Naive thymus-derived CD4-positive, alpha-beta T cell (primary cell): ENCODE measurements at regions of chr5 and their contacts with region 1.

Region 1: DNA sequence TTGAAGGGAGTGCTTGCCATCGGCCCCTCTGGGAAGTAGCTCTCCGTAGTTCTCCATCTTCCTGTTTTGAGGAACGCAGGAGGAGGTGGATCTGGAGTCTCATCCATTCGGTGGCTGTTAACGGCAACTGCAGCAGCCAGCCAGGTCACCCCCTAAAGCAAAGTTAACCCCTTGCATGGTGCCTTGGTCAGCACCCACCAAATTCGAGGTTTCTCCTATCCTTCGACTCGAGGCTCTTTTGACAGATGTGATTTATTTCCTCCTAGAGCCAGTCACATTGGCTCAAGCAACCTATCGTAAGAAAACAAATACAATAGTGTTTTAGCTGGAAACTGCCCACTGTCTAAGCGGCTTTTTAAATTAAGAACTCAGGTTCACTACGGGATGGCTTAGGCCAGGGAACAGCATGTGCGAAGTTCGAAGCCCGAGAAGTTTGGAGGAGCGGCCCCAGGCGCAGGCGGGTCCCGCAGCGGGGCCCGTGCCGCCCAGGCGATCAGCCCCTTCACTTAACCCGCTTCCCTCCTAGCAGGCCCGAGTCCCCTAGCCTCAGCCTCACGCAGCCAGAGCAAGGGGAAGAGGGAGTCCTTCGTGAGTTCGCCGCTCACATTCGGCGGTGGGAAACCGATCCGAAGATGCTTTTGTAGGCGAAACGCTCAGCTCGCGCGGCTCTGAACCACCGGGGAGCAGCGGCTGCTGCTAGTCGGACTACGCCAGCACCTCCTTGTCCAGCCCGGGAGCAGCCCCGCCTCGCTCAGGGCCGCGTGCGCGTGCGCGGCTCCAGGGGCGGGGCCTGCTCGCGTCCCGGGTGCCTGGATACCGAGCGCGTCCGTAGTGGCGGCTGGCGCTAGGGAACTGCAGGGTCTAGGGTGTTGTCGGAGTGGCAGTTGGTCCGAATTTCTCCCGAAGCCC is at the start of gene ROPN1L:
- DNase-seq: peak; percentile 64 to 89 (median 75)
- ATAC-seq: peak; percentile 97
- H3K4me3 ChIP-seq: peak within 1 kb of the TSS; percentile 97
- H3K4me3 Mint-ChIP-seq: peak within 1 kb of the TSS; percentile 83 to 94 (median 87)
- H3K27ac ChIP-seq: peak within 1 kb of the TSS; percentile 68
- H3K27ac Mint-ChIP-seq: peak within 1 kb of the TSS in 8 of 9 donors; percentile 31 to 82 (median 68)
- H3K4me1 ChIP-seq: peaks cover 35 to 44% of the 10 kb centered on the region in 2 donors
- H3K4me1 Mint-ChIP-seq: peaks cover 36 to 58% (median 49%) of the 10 kb centered on the region in 7 donors
- H3K27me3 ChIP-seq: no peaks in the 10 kb centered on the region
- H3K27me3 Mint-ChIP-seq: peaks cover 0 to 7% (median 0%) of the 10 kb centered on the region in 5 donors
- total RNA-seq, gene ROPN1L: 0.32 to 2.6 (median 0.61) TPM

Region 2: DNA sequence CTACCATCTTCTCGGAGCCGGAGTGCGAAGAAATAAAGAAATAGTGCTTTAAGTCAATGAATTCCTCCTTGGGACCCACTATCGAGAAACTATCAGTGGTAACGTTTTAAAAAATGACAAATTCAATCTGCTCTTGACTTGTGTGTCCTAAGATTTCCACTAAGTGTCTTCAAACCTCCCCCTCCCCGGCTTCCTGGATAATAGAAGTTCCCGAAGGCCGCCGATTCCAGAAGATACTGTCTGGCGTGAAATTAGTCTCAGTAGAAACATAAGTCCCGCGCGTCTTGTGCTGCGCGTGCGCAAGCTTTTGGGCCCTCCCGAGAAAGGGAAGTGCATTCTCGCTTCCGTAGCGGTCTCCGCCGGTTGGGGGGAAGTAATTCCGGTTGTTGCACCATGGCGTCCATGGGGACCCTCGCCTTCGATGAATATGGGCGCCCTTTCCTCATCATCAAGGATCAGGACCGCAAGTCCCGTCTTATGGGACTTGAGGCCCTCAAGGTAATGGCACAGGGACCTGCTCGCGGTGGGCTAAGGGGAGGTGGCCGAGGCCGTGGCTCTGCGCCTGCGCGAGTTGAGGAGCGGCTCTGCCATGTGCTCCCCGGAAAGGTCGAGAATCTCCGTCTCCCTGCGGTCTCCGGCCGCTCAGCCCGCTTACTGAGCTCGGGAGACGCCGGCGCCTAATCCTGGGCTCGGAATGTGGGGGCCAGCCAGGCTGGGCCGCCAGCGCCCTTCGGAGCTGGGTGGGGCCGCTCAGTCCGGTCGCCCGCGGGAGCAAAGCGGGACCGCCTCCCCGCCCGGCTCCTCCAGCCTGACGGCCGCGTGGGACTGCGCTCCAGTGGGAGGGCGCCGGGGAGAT is 191.2 kb before region 1 on chr5 and contains the start of gene CCT5:
- CTCF ChIA-PET with region 1: no interaction called
- POLR2A ChIA-PET with region 1: interaction called, 5 read pairs
- intact Hi-C with region 1: loop called (anchors 1 kb)
- DNase-seq: peak; percentile 83 to 97 (median 95)
- ATAC-seq: peak; percentile 91
- H3K4me3 ChIP-seq: peak within 1 kb of the TSS; percentile 97
- H3K4me3 Mint-ChIP-seq: peak within 1 kb of the TSS; percentile 83 to 99 (median 95)
- H3K27ac ChIP-seq: peak within 1 kb of the TSS; percentile 89
- H3K27ac Mint-ChIP-seq: peak within 1 kb of the TSS; percentile 96 to 100 (median 99)
- H3K4me1 ChIP-seq: peaks cover 12 to 32% of the 10 kb centered on the region in 2 donors
- H3K4me1 Mint-ChIP-seq: peaks cover 47 to 66% (median 53%) of the 10 kb centered on the region in 7 donors
- H3K27me3 ChIP-seq: no peaks in the 10 kb centered on the region
- H3K27me3 Mint-ChIP-seq: peaks cover 0 to 5% (median 0%) of the 10 kb centered on the region in 5 donors
- total RNA-seq, gene CCT5: 58.0 to 265 (median 81.9) TPM

Region 3: DNA sequence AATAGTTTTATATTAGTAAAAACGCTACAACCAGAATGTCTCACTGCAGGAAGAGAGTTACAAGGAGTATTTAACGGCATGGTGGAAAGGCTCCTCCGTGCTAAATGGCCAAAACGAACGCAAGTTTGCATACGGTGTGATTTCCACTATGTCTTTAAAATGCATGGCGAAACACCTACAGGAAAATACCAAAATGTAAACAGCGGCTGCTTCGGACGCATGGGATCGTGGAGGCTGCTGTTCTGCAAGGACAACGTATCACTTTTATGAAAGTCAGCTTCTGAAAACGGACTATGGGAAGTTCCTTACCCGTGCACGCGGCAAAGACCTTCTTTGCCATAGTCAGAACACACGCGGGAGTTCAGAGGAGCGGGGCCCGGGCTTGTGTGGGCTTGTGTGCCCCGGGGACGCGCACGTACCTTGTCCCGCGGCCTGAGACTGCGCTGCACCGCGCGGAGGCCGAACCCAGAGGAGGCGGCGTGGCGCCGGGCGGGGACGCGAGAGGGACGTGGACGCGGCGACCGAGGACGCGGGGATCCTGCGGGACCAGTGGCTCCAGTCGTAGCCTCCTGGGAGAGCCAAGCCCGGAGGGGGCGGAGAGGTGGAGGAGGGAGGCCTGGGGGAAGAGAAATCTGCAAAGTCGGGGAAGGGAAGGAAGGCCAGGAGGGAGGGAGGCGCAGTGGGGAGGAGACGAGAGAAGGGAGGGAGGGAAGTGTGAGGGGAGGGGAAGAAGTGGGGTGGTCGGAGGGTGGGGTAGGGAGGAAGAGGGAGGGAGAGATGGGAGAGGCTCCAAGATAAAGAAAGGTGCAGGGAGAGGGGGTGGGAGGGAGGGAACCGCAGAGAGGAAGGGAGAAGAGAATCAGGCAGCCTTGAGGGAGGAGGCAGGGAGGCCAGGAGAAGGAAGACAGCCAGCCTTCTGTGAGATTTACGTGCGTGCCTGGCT is 133.9 kb before region 1 on chr5 and contains the start of gene CMBL:
- CTCF ChIA-PET with region 1: no interaction called
- POLR2A ChIA-PET with region 1: no interaction called
- intact Hi-C with region 1: loop called in 1 of 2 experiments (anchors 5 kb)
- DNase-seq: peak in 6 of 9 donors; percentile 11 to 30 (median 22)
- ATAC-seq: peak; percentile 75
- H3K4me3 ChIP-seq: peak within 1 kb of the TSS; percentile 54
- H3K4me3 Mint-ChIP-seq: peak within 1 kb of the TSS; percentile 79 to 89 (median 84)
- H3K27ac ChIP-seq: peak within 1 kb of the TSS; percentile 21
- H3K27ac Mint-ChIP-seq: peak within 1 kb of the TSS in 4 of 9 donors; percentile 2 to 87 (median 19)
- H3K4me1 ChIP-seq: no peaks in the 10 kb centered on the region
- H3K4me1 Mint-ChIP-seq: peaks cover 5 to 11% (median 7%) of the 10 kb centered on the region in 7 donors
- H3K27me3 ChIP-seq: peaks cover 0 to 3% of the 10 kb centered on the region in 2 donors
- H3K27me3 Mint-ChIP-seq: peaks cover 12 to 45% (median 30%) of the 10 kb centered on the region in 5 donors
- total RNA-seq, gene CMBL: 0.21 to 1.8 (median 1.3) TPM

Region 4: GRCh38 chr5:10424124-10424731 is 17.1 kb before region 1 on chr5:
- CTCF ChIA-PET with region 1: interaction called, 6 read pairs
- POLR2A ChIA-PET with region 1: interaction called, 5 read pairs
- intact Hi-C with region 1: loop called in 1 of 2 experiments (anchors 2 kb)
- DNase-seq: peak in 3 of 9 donors; percentile 19 to 29 (median 22)
- ATAC-seq: peak; percentile 60
- H3K4me3 ChIP-seq: no peak overlapping the region
- H3K4me3 Mint-ChIP-seq: no peak overlapping the region
- H3K27ac ChIP-seq: no peak overlapping the region
- H3K27ac Mint-ChIP-seq: peak overlapping the region in 4 of 9 donors; percentile 15 to 46 (median 24)
- H3K4me1 ChIP-seq: peaks cover 0 to 21% of the 10 kb centered on the region in 2 donors
- H3K4me1 Mint-ChIP-seq: peaks cover 11 to 53% (median 35%) of the 10 kb centered on the region in 7 donors
- H3K27me3 ChIP-seq: no peaks in the 10 kb centered on the region
- H3K27me3 Mint-ChIP-seq: no peaks in the 10 kb centered on the region

Region 5: GRCh38 chr5:10761166-10761932 is 320.0 kb after region 1 on chr5 and contains the start of gene DAP:
- CTCF ChIA-PET with region 1: no interaction called
- POLR2A ChIA-PET with region 1: no interaction called
- intact Hi-C with region 1: loop called (anchors 1 to 2 kb)
- DNase-seq: peak; percentile 86 to 97 (median 92)
- ATAC-seq: peak; percentile 93
- H3K4me3 ChIP-seq: peak within 1 kb of the TSS; percentile 73
- H3K4me3 Mint-ChIP-seq: peak within 1 kb of the TSS; percentile 89 to 96 (median 92)
- H3K27ac ChIP-seq: peak within 1 kb of the TSS; percentile 83
- H3K27ac Mint-ChIP-seq: peak within 1 kb of the TSS; percentile 82 to 97 (median 89)
- H3K4me1 ChIP-seq: peaks cover 15 to 16% of the 10 kb centered on the region in 2 donors
- H3K4me1 Mint-ChIP-seq: peaks cover 14 to 60% (median 54%) of the 10 kb centered on the region in 7 donors
- H3K27me3 ChIP-seq: no peaks in the 10 kb centered on the region
- H3K27me3 Mint-ChIP-seq: peaks cover 0 to 14% (median 0%) of the 10 kb centered on the region in 5 donors
- total RNA-seq, gene DAP: 31.9 to 58.6 (median 38.5) TPM

Region 6: GRCh38 chr5:10964806-10965205 is 523.5 kb after region 1 on chr5:
- CTCF ChIA-PET with region 1: no interaction called
- POLR2A ChIA-PET with region 1: no interaction called
- intact Hi-C with region 1: no loop called
- DNase-seq: no peak
- ATAC-seq: no peak
- H3K4me3 ChIP-seq: no peak overlapping the region
- H3K4me3 Mint-ChIP-seq: no peak overlapping the region
- H3K27ac ChIP-seq: no peak overlapping the region
- H3K27ac Mint-ChIP-seq: peak overlapping the region in 1 of 9 donors; percentile 31
- H3K4me1 ChIP-seq: peaks cover 0 to 7% of the 10 kb centered on the region in 2 donors
- H3K4me1 Mint-ChIP-seq: peaks cover 0 to 17% (median 13%) of the 10 kb centered on the region in 7 donors
- H3K27me3 ChIP-seq: no peaks in the 10 kb centered on the region
- H3K27me3 Mint-ChIP-seq: no peaks in the 10 kb centered on the region